Heart right ventricle (tissue), 16 donors: ENCODE measurements at regions of chr15 and their contacts with region 1.

Region 1: GRCh38 chr15:92288755-92289154 is 104.9 kb upstream of the ST8SIA2 start:
- DNase-seq: no peak
- ATAC-seq: no peak
- H3K4me3 ChIP-seq: no peak overlapping the region
- H3K27ac ChIP-seq: no peak overlapping the region
- H3K4me1 ChIP-seq: peaks cover 0 to 23% (median 0%) of the 10 kb centered on the region in 9 donors
- H3K27me3 ChIP-seq: peaks cover 0 to 6% (median 0%) of the 10 kb centered on the region in 7 donors
- CTCF ChIP-seq: no peak

Region 2: GRCh38 chr15:92377083-92377789 is 88.5 kb after region 1 on chr15:
- intact Hi-C with region 1: loop called in 3 of 10 experiments (anchors 5 to 10 kb)
- DNase-seq: peak; percentile 35 to 54
- ATAC-seq: peak; percentile 86 to 99 (median 97)
- H3K4me3 ChIP-seq: no peak overlapping the region
- H3K27ac ChIP-seq: peak overlapping the region in 5 of 10 donors; percentile 21 to 59 (median 53)
- H3K4me1 ChIP-seq: peaks cover 0 to 22% (median 0%) of the 10 kb centered on the region in 9 donors
- H3K27me3 ChIP-seq: peaks cover 0 to 10% (median 0%) of the 10 kb centered on the region in 7 donors
- CTCF ChIP-seq: peak in 1 of 9 donors; percentile 11

Region 3: GRCh38 chr15:92383519-92384326 is 95.0 kb after region 1 on chr15:
- intact Hi-C with region 1: loop called in 3 of 10 experiments (anchors 5 to 10 kb)
- DNase-seq: peak in 1 of 2 donors; percentile 29
- ATAC-seq: no peak
- H3K4me3 ChIP-seq: no peak overlapping the region
- H3K27ac ChIP-seq: no peak overlapping the region
- H3K4me1 ChIP-seq: no peaks in the 10 kb centered on the region
- H3K27me3 ChIP-seq: peaks cover 0 to 34% (median 21%) of the 10 kb centered on the region in 7 donors
- CTCF ChIP-seq: peak; percentile 24 to 65 (median 59)